SK-N-SH (cell line): ENCODE measurements at regions of chr2 and their contacts with region 1.

Region 1: DNA sequence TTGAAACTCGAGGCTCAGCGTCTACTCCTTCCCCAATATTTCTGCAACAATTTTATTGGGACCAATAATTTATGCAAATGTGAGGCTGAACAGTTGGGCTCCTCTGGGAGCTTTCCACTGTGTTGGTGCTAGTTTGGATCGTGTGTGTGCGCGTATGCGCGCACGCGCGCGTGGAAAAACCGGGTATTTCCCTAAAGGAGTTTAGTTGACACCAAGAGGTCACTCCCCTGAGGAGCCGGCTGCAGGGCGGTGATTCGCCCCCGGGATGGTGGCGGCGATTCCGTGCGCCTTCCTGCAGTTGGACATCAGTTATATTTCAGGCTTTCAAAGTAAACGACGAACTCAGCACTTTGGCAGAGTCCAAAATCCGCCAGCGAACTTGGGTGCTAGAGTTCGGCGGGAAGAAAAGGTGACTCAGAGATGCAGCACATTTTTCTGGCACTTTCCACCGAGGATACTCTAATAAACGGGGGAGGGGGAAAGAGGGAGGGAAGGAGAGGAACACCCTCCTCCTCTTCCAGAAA is 186.5 kb upstream of the FANCL start:
- DNase-seq: peak; percentile 51
- H3K4me3 ChIP-seq: peak overlapping the region; percentile 51 to 55
- H3K27ac ChIP-seq: peak overlapping the region in 1 of 2 experiments; percentile 51; a peak in 2 of 4 replicates
- H3K4me1 ChIP-seq: no peaks in the 10 kb centered on the region; a peak in 2 of 4 replicates
- H3K27me3 ChIP-seq: peaks cover 5% of the 10 kb centered on the region; the same call in 1 of the 2 replicates
- CTCF ChIP-seq: no peak
- EP300 ChIP-seq: no peak
- RAD21 ChIP-seq: no peak

Region 2: DNA sequence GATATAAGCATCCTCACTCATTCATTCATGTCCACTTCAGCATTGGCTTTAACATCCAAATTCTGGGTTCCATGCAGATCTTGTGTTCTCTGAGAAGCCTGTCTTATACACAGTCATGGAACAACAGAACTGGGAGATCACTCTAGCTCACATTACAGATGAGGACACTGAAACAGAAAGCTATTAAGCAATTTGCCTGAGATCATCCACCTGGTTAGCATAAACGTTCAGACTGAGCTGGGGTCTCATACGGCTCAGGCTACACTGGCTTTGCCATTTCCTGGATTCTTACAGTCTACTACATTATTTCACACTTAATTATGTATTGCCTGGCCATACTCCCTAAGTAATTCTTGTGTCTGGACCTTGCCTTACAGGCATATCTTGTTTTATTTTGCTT is 17.1 kb before region 1 on chr2:
- CTCF ChIA-PET with region 1: interaction called, 11 read pairs
- POLR2A ChIA-PET with region 1: no interaction called
- DNase-seq: no peak
- H3K4me3 ChIP-seq: no peak overlapping the region
- H3K27ac ChIP-seq: no peak overlapping the region
- H3K4me1 ChIP-seq: no peaks in the 10 kb centered on the region; a peak in 1 of 4 replicates
- H3K27me3 ChIP-seq: no peaks in the 10 kb centered on the region
- CTCF ChIP-seq: no peak
- EP300 ChIP-seq: no peak
- RAD21 ChIP-seq: no peak